ENCODE measurements at regions of chr1 and their contacts with region 1.

Region 1: GRCh38 chr1:220879076-220879508 is at the start of gene HLX:
- DNase-seq: peak; percentile 81
- H3K4me3 Mint-ChIP-seq: peak within 1 kb of the TSS; percentile 90
- H3K27ac Mint-ChIP-seq: peak within 1 kb of the TSS; percentile 88
- H3K4me1 Mint-ChIP-seq: peaks cover 26% of the 10 kb centered on the region
- H3K27me3 Mint-ChIP-seq: peaks cover 74% of the 10 kb centered on the region
- total RNA-seq, gene HLX: 5.7 and 7.2 TPM in 2 replicates

Region 2: DNA sequence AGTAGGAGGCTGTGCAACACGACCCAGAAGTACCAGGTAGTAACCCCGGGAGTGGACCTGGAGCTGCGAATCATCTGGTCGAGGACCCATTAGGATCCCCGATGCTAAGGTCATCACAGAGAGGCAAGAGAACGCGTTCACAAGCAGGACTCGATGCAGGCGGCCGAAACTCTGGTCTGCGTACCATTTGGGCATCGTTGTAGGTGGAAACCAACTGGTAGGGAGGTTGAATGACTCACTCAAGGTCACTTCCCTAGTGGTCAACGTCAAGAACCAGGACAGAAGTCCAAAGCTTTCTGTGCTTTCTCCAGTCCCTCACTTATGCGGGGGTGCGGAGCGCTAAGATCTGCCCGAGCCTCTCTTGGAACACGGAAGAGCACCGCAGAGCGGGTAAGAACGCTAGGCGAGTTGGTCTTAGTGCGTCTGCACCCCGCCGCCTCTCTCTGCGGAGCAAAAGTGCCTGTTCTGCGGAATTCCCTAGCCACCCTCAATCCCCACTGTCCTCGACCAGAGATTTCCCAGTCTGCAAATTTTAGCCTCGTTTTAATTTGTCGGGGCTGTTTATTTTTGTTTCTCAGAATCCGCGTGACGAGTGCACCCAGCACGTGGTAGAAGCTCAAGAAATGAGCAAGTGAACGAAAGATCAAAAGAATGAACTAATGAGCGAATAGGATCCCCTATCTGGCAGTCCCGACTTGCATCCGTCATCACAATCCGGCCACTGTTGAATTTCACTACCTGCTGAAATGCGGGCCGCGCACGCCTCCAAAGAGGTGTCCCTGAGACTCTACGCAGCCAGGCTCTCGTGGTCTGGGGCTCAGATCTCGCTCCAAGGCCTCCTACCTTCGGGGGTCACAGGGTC is 12.4 kb after region 1 on chr1:
- intact Hi-C with region 1: loop called (anchors 2 kb)
- DNase-seq: no peak
- H3K4me3 Mint-ChIP-seq: no peak overlapping the region
- H3K27ac Mint-ChIP-seq: no peak overlapping the region
- H3K4me1 Mint-ChIP-seq: peaks cover 1% of the 10 kb centered on the region
- H3K27me3 Mint-ChIP-seq: peaks cover 77% of the 10 kb centered on the region

Region 3: GRCh38 chr1:221069178-221069903 is 190.2 kb after region 1 on chr1:
- intact Hi-C with region 1: loop called (anchors 1 kb)
- DNase-seq: no peak
- H3K4me3 Mint-ChIP-seq: no peak overlapping the region
- H3K27ac Mint-ChIP-seq: peak overlapping the region; percentile 78
- H3K4me1 Mint-ChIP-seq: peaks cover 4% of the 10 kb centered on the region
- H3K27me3 Mint-ChIP-seq: no peaks in the 10 kb centered on the region

Region 4: GRCh38 chr1:221203224-221204054 is 324.3 kb after region 1 on chr1:
- intact Hi-C with region 1: loop called (anchors 2 kb)
- DNase-seq: peak; percentile 91
- H3K4me3 Mint-ChIP-seq: no peak overlapping the region
- H3K27ac Mint-ChIP-seq: no peak overlapping the region
- H3K4me1 Mint-ChIP-seq: peaks cover 4% of the 10 kb centered on the region
- H3K27me3 Mint-ChIP-seq: no peaks in the 10 kb centered on the region

Measured in activated CD4-positive, alpha-beta T cell treated with anti-CD3 and anti-CD28 coated beads, Interleukin-2, amount 10 ng/mL, durations not matched to agents 24 days and 14 days (primary cell).